Activated naive CD4-positive, alpha-beta T cell treated with anti-CD3 and anti-CD28 coated beads for 36 hours (primary cell): ENCODE measurements at regions of chr18 and their contacts with region 1.

Region 1: DNA sequence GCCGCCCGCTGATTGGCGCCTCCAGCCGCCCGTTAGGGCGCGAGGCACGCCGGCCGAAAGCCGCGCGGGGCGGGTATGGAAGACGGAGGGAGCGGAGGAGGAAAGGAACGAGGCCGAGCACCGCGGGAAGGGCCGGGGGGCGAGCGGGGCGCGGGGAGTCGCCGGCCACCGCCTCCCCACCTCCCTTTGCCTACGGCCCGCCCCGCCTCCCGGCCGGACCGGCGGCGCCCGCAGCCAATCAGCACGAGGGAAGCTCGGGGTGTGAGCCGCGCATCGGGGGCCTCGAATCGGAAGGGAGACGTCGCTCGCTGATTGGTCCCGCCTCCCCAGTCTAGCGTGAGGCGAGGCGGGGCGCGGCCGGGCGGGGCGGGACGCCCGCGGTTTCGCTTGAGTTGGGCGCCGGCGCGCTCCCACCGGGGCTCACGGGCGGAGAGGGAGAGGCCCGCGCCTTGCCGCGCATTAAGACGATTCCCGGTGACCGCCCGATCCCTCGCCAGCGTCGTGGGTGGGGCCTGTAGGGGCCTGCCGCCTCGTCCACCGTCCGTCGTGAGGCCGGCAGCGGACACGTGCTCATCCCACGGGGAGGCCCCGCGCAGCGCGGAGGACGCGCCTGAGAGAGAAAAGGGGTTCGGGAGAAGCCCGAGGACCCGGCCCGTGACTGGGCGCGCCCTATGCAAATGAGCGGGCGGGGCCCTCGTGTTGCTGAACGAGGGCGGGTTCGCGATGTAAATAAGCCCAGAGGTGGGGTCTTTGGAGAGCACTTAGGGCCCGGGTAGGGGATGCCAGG is 665 bp upstream of the SMAD2 start:
- DNase-seq: peak; percentile 96
- H3K4me3 Mint-ChIP-seq: peak overlapping the region; percentile 80
- H3K27ac Mint-ChIP-seq: peak overlapping the region; percentile 87
- H3K4me1 Mint-ChIP-seq: peaks cover 34% of the 10 kb centered on the region
- H3K27me3 Mint-ChIP-seq: no peaks in the 10 kb centered on the region

Region 2: GRCh38 chr18:47150029-47150823 is 780.9 kb before region 1 on chr18 and contains the start of gene HDHD2:
- CTCF ChIA-PET with region 1: no interaction called
- intact Hi-C with region 1: loop called (anchors 2 kb)
- DNase-seq: peak; percentile 83
- H3K4me3 Mint-ChIP-seq: peak within 1 kb of the TSS; percentile 95
- H3K27ac Mint-ChIP-seq: peak within 1 kb of the TSS; percentile 96
- H3K4me1 Mint-ChIP-seq: peaks cover 35% of the 10 kb centered on the region
- H3K27me3 Mint-ChIP-seq: no peaks in the 10 kb centered on the region
- total RNA-seq, gene HDHD2: 32.8 to 33.9 TPM

Region 3: DNA sequence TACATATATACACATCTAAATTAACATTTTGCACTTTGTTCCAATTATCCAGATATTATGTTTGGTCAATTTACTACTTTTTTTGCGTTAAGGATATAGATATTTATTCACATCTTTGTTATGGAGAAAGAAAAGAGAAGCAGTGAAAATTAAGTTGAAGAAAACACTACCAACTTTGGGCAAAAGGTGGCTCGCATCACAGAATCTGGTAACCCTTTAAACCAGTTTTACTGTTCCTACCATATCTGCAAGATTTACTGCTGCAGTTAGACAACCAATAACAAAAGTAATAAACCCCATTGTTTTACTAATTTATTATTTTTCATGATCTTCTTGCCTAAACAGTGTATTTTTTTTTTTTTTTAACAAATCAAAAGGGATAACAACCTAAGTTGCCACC is 54.3 kb before region 1 on chr18:
- CTCF ChIA-PET with region 1: no interaction called
- intact Hi-C with region 1: loop called (anchors 5 kb)
- DNase-seq: no peak
- H3K4me3 Mint-ChIP-seq: no peak overlapping the region
- H3K27ac Mint-ChIP-seq: no peak overlapping the region
- H3K4me1 Mint-ChIP-seq: peaks cover 29% of the 10 kb centered on the region
- H3K27me3 Mint-ChIP-seq: no peaks in the 10 kb centered on the region

Region 4: GRCh38 chr18:47912343-47912742 is 18.8 kb before region 1 on chr18:
- CTCF ChIA-PET with region 1: no interaction called
- intact Hi-C with region 1: loop called (anchors 1 kb)
- DNase-seq: peak; percentile 41
- H3K4me3 Mint-ChIP-seq: no peak overlapping the region
- H3K27ac Mint-ChIP-seq: peak overlapping the region; percentile 59
- H3K4me1 Mint-ChIP-seq: peaks cover 84% of the 10 kb centered on the region
- H3K27me3 Mint-ChIP-seq: no peaks in the 10 kb centered on the region

Region 5: DNA sequence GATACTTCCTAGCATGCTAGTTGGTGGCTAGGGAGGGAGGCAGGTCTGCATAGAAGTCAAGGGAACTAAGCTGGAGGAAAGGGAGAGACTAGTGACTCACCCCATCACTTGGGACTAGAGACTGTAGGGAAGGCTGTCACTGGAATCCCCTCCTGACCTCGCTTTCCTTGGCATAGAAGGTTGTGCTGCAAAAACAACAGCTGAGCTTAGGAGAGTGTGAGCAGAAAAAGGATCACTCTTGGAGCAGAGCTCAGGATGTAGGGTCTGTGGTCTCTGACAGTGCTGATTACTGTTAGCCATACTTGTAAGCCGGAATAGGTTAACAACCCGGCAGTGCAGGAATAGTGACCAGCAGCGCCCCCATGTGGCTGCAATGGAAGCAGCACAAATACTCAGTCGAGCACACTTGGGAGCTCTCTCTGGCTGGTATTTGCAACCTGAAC is 66.2 kb after region 1 on chr18:
- CTCF ChIA-PET with region 1: interaction called, 5 read pairs
- intact Hi-C with region 1: loop called (anchors 1 kb)
- DNase-seq: peak; percentile 56
- H3K4me3 Mint-ChIP-seq: no peak overlapping the region
- H3K27ac Mint-ChIP-seq: no peak overlapping the region
- H3K4me1 Mint-ChIP-seq: no peaks in the 10 kb centered on the region
- H3K27me3 Mint-ChIP-seq: no peaks in the 10 kb centered on the region

Region 6: GRCh38 chr18:48934723-48935432 is 1003.8 kb after region 1 on chr18:
- CTCF ChIA-PET with region 1: no interaction called
- intact Hi-C with region 1: loop called (anchors 10 kb)
- DNase-seq: peak; percentile 29
- H3K4me3 Mint-ChIP-seq: peak overlapping the region; percentile 49
- H3K27ac Mint-ChIP-seq: peak overlapping the region; percentile 95
- H3K4me1 Mint-ChIP-seq: peaks cover 82% of the 10 kb centered on the region
- H3K27me3 Mint-ChIP-seq: no peaks in the 10 kb centered on the region

Region 7: GRCh38 chr18:49813319-49814146 is 1882.4 kb after region 1 on chr18 and contains the start of gene ACAA2:
- CTCF ChIA-PET with region 1: no interaction called
- intact Hi-C with region 1: loop called (anchors 1 kb)
- DNase-seq: peak; percentile 80
- H3K4me3 Mint-ChIP-seq: peak within 1 kb of the TSS; percentile 90
- H3K27ac Mint-ChIP-seq: peak within 1 kb of the TSS; percentile 96
- H3K4me1 Mint-ChIP-seq: peaks cover 36% of the 10 kb centered on the region
- H3K27me3 Mint-ChIP-seq: no peaks in the 10 kb centered on the region
- total RNA-seq, gene ACAA2: 67.9 to 69.8 TPM